Endothelial cell of umbilical vein (primary cell): ENCODE measurements at regions of chr13 and their contacts with region 1.

Region 1: DNA sequence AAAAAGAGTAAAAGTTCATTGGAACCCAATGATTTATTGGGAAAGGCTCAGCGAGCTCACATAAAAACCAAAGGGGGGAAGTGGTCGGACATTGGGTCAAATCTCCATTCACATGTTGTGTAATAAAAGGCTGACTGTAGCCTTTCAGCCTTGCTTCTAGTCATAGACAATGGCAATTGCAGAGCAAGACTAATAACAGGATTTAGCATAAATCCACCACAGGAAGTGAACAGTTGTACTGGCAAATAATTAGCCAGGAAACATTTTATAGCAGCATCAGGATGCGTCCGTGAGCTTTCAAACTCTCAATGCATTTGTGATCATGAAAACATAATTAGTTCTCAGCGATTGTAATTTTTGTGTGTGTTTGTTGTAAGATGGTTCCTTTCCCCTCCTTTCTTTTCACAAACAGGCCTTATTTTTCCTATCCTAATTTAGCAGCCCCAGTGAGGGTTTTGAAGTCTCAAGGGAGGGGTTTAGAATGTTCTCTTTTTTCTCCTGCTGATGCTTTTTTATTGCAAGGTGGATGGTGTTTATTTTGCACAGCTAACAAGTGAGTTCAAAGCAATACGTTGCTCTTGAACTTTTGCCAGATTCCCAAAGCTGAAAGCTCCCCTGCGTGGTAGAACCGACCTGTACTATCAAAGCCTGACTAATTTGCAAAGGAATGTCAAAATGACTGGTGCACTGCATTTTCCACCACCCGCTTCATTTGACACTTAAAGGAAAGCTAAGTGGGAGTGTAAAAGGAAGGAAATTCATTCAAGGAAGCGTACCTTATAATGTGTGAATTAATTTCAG is 105.6 kb downstream of the SPRY2 start:
- DNase-seq: peak; percentile 79
- H3K4me3 ChIP-seq: peak overlapping the region in 1 of 3 experiments; percentile 41
- H3K27ac ChIP-seq: peak overlapping the region; percentile 89
- H3K4me1 ChIP-seq: peaks cover 18% of the 10 kb centered on the region
- H3K27me3 ChIP-seq: no peaks in the 10 kb centered on the region
- CTCF ChIP-seq: no peak
- POLR2A ChIP-seq: no peak

Region 2: DNA sequence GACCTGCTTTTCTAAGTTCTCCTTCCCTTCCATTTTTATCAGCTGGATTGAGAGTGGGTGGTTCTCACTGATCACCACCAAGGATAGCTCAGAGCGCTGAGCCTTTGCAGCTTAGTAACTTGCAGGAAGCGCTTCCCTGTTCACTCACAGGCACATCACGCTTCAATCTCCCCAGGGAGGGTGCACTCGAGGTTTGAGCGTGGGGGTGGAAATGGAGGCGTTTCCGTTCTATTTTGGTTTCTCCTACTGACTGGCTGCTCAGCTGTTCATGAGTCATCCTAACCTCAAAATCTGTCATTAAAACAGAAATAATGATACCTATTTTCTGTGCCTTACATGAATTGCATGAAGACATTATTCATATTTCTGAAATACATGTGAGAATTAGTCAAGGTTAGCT is 186.6 kb before region 1 on chr13:
- CTCF ChIA-PET with region 1: no interaction called
- POLR2A ChIA-PET with region 1: no interaction called
- dilution Hi-C with region 1: no loop called
- intact Hi-C with region 1: loop called (anchors 5 kb)
- DNase-seq: peak; percentile 91
- H3K4me3 ChIP-seq: no peak overlapping the region
- H3K27ac ChIP-seq: peak overlapping the region; percentile 36
- H3K4me1 ChIP-seq: peaks cover 26% of the 10 kb centered on the region
- H3K27me3 ChIP-seq: no peaks in the 10 kb centered on the region
- CTCF ChIP-seq: no peak
- POLR2A ChIP-seq: no peak

Region 3: GRCh38 chr13:80132741-80133601 is 102.4 kb before region 1 on chr13:
- CTCF ChIA-PET with region 1: no interaction called
- POLR2A ChIA-PET with region 1: no interaction called
- dilution Hi-C with region 1: no loop called
- intact Hi-C with region 1: loop called (anchors 1 kb)
- DNase-seq: peak; percentile 84
- H3K4me3 ChIP-seq: peak overlapping the region in 1 of 3 experiments; percentile 21
- H3K27ac ChIP-seq: peak overlapping the region; percentile 32
- H3K4me1 ChIP-seq: peaks cover 23% of the 10 kb centered on the region
- H3K27me3 ChIP-seq: no peaks in the 10 kb centered on the region
- CTCF ChIP-seq: no peak
- POLR2A ChIP-seq: no peak

Region 4: GRCh38 chr13:80217614-80218456 is 17.5 kb before region 1 on chr13:
- CTCF ChIA-PET with region 1: interaction called, 5 read pairs
- POLR2A ChIA-PET with region 1: interaction called, 4 read pairs
- dilution Hi-C with region 1: no loop called
- intact Hi-C with region 1: loop called (anchors 1 kb)
- DNase-seq: peak; percentile 82
- H3K4me3 ChIP-seq: no peak overlapping the region
- H3K27ac ChIP-seq: peak overlapping the region; percentile 85
- H3K4me1 ChIP-seq: peaks cover 15% of the 10 kb centered on the region
- H3K27me3 ChIP-seq: no peaks in the 10 kb centered on the region
- CTCF ChIP-seq: no peak
- POLR2A ChIP-seq: no peak

Region 5: GRCh38 chr13:80276371-80277289 is 41.3 kb after region 1 on chr13:
- CTCF ChIA-PET with region 1: no interaction called
- POLR2A ChIA-PET with region 1: no interaction called
- dilution Hi-C with region 1: no loop called
- intact Hi-C with region 1: loop called (anchors 1 kb)
- DNase-seq: peak; percentile 79
- H3K4me3 ChIP-seq: no peak overlapping the region
- H3K27ac ChIP-seq: peak overlapping the region; percentile 48
- H3K4me1 ChIP-seq: peaks cover 12% of the 10 kb centered on the region
- H3K27me3 ChIP-seq: no peaks in the 10 kb centered on the region
- CTCF ChIP-seq: peak in 1 of 2 donors; percentile 14
- POLR2A ChIP-seq: no peak